ENCODE measurements at regions of chr6 and their contacts with region 1.

Region 1: DNA sequence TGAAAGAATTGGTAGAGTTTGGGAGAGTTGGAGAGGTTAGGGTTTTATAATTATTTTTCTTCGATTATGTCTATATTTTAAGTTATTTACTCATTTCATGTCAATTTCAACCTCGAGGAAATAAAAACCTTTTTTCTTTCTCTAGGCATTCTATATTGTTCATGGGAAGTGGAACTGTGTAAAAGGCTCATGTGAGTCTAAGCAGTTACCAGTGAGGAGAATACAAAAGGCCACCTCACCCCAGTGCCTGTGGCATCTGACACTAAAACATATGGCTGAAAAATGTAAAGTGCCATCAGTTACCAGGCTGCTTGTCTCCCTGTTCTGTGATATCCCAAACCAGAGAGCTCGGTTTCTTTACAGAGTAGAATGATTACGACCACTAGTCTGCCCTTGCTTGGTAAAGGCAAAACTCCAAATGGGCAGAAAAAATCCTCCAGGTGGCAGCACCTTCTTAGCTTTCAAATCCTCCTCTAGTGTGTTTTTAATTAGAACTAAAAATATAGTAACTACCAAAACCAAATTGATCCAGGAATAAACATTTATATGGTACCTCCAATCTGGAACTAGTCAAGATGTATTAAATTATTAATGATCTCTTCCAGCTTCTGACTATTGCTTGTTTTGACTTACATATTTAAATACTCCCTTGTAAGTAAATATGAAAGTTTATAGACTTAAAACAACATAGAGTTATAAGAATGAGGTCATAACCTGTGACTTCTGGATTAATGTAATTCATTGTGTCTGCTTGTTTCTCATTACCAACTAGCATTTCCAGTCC is 122.6 kb upstream of the MCHR2 start:
- DNase-seq: peak; percentile 81
- H3K4me3 ChIP-seq: no peak overlapping the region
- CTCF ChIP-seq: peak; percentile 81

Region 2: DNA sequence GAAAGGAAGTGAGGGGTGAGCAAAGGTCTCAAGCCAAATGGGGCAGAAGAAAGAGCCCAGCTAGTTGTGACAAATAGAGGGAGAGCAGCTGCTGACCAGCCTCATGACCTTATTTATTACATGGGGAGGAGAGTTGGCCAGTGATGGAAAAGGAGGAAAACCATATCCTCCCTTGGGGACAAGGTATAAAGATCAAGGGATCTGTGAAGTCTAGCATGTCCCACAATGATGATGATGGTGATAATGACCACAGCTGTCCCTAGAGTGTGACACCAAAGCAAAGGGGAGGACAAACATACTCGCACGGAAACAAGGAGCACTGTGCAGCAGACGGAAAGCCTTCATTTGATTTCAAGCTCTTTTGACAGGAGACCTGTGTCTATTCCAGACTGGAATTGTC is 67.9 kb after region 1 on chr6:
- in situ Hi-C with region 1: loop called (anchors 5 kb)
- DNase-seq: no peak
- H3K4me3 ChIP-seq: no peak overlapping the region
- CTCF ChIP-seq: no peak

Region 3: DNA sequence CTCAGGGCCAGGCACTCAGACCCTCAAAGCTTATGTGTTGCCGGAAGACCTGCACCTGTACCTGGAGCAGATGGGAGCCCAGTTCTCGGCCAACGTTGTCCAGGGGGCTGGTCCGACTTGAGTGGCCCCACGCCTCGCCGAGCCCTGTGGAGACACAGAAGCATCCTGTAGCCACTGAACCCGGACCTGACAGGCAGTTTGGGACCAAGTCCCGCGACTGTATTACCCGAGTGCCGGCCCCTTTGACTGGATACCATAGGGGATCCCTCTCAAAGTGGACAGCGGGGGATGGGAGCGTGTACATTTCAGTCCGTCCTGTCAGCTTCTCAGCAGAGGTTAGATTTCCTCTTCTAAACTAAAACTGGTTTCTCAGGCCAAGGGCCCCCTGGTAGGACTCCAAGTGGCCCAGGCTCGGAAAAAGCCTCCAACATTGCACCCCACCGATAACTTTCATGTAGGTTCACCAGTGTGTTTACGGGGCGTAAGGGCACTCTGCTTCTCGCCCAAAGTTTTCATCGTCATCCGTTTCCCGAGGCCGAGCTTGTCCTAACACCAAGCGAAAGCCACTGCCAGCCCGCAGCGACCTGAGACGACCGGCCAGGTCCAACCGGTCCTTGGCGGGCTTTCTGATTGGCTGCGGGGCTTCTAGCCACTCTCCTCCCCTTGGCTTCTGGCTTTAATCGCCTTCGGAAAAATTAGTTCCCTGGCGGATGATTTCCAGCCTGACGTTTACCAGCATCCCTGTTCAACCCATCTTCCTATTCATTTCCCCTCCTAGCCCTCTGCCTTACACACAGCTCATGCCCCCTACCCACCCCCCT is 337.3 kb after region 1 on chr6:
- in situ Hi-C with region 1: loop called (anchors 5 kb)
- DNase-seq: no peak
- H3K4me3 ChIP-seq: no peak overlapping the region
- CTCF ChIP-seq: no peak

Region 4: GRCh38 chr6:100664274-100665040 is 547.9 kb after region 1 on chr6:
- in situ Hi-C with region 1: loop called (anchors 10 kb)
- DNase-seq: peak; percentile 13
- H3K4me3 ChIP-seq: no peak overlapping the region
- CTCF ChIP-seq: peak; percentile 41

Measured in astrocyte of the cerebellum (primary cell).